ENCODE measurements at regions of chr15 and their contacts with region 1.

Region 1: DNA sequence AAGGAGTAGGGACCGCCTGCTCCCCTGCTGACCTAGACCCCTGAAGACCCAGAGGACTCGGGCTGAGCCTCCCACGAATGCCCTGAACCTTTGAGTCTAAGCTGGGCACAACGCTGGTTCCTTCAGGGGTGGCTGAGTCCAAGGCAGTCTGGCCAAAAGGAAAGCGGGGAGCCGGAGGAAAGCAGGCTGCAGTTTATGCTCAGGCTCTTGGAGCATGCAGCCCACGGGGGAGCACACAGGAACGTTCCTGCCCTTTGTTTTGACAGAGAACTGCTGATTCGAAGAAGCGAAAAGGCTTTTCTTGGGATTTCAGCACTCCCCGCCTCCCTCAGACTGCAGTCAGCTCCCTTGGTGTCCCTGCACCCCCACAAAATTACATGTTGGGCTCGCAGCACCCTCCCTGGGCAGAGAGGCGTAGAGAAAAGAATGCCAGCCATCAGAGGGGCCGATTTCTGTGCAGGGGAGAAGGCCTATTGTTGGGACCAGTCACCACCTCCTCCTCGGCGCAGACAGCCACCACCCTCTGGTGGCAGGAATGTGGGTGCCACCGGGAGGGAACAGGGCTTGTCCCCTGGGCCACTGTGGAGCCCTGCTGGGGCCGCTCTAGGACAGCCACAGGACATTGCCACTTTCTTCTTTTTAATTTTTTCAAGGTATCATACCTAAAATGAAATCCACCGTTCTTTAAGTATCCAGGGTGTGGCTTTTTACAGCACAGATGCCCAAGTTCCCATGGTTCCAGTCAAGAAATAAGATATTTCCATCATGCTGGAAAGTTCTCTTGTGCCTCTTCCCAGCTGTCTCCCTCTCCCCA is 72.2 kb downstream of the SMAD6 start:
- DNase-seq: peak; percentile 90
- ATAC-seq: peak; percentile 96

Region 2: GRCh38 chr15:66306381-66306780 is 467.8 kb before region 1 on chr15:
- intact Hi-C with region 1: no loop called
- DNase-seq: no peak
- ATAC-seq: no peak

Region 3: GRCh38 chr15:66603301-66604179 is 170.7 kb before region 1 on chr15:
- intact Hi-C with region 1: loop called (anchors 5 kb)
- DNase-seq: peak; percentile 77
- ATAC-seq: peak; percentile 87

Region 4: DNA sequence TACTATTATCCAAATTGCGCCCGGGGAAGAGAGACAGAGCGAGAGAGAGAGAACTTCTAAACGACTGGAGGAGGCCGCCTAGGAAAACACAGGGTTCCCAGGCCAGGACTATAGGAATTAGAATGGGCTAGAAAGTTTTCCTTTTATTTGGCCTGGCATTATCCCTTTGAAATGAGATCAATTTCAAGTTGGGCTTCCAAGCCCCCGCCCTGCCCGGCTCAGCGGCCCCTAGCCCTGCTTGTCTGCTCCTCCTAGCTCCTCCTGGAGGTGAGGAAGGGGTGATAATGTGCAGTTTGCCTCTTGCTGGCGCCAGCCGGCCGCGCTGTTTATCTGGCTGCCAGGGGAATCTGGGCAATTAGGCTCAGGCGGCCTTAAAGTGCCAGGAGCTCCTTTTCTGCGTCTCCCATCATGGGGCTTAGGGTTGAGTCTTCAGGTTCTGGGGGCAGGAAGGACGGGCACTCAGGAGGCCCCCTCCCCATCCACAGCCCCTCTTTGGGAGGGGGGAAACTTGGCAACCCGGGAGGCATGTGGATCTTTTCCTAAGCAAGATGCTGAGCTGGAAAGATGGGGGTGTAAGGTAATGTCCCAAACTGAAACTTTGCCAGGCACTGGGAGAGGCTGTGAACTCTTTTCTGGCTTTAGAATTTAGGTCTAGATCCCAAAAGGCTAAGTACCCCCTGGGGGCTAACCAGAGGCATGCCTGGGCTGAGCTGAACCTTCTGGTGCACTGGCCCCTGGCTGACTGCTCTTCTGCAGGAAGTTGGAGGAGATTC is 66.7 kb before region 1 on chr15:
- intact Hi-C with region 1: loop called (anchors 5 kb)
- DNase-seq: peak; percentile 64
- ATAC-seq: peak; percentile 58

Region 5: GRCh38 chr15:66931768-66932633 is 157.8 kb after region 1 on chr15:
- intact Hi-C with region 1: no loop called
- DNase-seq: no peak
- ATAC-seq: no peak

Region 6: DNA sequence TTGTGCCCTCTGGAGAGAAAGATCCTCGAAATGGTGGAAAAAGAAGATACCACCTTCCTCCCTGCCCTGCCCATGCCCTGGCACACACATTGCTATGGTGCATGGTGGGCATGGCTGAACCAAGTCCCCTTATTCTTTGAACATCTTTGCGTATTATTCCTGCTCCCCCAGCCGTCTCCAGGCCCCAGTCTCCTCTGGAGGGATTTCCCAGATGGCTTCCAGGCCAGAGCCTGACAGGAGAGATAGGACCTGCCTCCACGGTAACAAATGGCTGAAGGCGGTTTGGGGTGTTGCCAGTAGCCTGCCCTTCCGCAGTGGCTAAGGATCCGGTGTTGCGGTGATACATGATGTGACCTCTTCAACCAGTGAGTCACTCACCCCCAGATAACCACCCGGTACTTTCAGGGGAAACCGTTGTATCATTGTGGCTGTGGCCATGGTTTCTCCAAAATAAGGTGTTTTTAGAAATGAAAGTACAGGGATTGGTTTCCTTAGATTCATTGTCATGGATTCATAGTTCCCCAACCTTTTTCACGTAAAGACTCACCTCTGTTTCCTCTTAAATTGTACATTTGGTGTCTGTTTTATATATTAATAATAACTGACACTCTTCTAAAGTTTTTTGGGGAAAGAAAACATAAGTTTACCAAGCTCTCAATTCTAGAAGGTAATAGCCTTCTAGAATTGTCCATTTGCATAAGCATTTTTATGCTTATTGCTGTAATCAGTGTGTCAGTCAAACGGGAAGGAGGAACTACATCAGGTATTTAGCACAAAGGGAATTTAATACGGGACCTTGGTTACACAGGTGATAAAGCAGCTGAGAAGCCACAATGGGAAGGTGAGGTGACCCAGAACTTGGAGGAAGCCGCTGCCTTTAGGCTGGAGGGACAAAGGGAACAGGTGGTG is 317.1 kb after region 1 on chr15:
- intact Hi-C with region 1: no loop called
- DNase-seq: peak; percentile 82
- ATAC-seq: peak; percentile 87

Measured in Right ventricle myocardium superior (tissue), 1 donor.